BJ (cell line): ENCODE measurements at regions of chr1 and their contacts with region 1.

Region 1: DNA sequence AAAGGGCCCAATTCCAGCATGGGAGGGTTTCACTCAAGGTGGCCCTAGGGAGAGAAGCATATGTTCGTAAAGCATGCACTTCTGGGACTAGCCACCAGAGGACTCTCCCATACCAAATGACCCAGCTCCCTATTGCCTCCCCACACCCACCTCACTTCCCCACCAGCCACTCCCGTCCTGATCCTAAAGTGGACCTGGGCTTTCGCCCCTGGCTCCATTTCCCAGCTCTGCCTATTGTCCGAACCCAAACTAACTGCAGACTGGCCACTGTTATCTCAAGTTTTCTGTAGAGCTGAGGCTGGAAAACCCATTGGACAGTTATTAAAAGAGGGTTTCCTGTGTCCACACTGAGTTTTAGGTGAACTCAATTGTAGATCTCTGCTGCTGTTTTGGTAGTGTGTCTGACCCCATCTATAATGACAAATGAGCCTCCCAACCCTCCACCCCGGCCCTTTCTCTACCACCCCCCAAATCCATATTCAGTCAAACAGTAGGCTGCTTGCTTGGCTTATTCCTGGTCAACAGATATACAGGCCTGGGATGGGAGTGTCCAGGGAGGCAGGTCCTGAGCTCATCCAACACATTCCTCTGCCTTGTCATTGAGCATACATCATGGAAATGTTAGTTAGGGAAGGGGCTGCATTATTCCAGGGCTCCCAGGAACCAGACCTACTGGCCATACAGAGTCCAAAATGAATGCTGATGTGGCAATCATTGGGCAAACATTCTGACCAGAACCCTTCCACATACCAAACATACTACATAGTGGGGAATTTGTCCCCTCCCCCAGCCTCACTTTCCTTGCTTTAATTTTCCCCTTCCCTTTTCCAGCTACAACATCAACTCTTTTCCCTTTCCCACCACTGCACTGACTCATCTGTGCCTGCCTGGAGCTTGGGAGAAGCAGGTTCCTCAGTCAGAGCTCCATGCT is 59.2 kb downstream of the ABCA4 start:
- DNase-seq: no peak
- H3K4me3 ChIP-seq: no peak overlapping the region
- H3K27me3 ChIP-seq: no peaks in the 10 kb centered on the region
- CTCF ChIP-seq: peak; percentile 89

Region 2: DNA sequence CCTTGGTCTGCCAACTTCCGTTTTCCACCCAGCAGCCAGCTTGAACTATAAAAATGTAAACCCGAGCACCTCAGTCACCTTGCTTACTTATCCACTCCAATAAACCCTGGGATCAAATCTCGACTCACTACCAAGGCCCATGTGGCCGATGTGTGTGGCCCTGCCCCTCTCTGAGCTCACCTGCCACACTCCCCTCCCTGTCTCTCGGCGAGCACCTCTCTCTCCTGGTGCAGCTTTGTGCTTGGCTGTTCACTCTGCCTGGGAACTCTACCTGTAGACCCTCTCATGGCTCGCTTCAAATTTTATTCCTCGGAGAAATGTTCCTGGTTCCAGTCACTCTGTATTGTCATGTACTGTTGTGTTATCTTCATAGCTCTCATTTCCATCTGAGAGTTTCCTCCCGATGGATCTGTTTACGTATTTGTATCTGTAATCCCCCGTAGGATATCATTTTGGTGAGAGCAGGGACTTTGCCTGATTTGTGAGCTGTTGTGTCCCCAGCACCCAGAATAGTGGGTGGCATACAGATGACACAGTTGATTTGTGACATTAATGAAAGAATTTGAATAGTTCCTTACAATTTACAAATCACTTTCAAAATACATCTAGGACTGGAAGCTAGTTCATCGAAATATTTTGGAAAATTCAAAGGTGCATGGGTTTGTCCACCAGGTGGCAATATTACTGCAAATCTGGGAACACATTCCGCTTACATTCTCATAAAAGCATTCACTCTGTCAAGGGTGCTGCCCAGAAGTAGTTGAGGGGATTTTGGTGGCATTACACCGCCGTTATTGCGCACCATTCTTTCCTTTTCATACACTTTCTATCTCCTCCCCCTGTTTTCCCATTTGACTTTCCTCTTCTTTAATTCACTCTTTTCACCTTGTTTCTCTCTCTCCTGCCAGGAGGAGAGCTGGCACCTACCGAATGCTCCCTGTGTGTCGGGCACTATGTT is 36.1 kb before region 1 on chr1:
- CTCF ChIA-PET with region 1: interaction called, 32 read pairs
- POLR2A ChIA-PET with region 1: no interaction called
- DNase-seq: no peak
- H3K4me3 ChIP-seq: no peak overlapping the region
- H3K27me3 ChIP-seq: peaks cover 2% of the 10 kb centered on the region; the same call in 1 of the 2 replicates
- CTCF ChIP-seq: peak; percentile 67

Region 3: DNA sequence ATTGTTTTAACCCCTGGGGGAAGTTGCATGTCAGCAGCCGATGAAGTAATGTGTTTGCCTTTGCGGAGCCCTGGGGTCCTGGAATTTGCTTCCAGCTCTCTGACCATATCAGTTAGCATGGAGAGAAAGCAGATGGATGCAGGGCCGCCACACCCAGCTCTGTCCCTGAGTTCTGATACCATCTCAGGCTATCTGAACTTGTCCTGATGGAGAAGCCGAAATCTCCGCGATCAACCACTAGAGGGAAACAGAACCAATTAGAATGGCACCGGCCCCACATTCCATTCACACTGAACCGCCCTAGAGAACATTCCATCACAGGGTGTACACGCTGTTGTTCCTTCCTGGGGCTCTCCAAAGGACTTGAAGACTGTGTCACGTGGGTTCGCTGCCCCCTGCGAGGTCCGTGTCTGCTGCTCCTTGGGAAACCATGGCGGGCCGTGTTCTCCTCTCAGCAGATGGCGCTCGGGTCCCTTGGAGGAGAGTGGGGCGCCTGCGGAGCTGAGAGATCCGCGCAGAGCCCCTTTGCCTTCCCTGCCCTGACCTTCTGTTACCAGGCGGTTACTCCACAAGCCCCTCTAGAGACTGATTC is 16.2 kb before region 1 on chr1:
- CTCF ChIA-PET with region 1: interaction called, 34 read pairs
- POLR2A ChIA-PET with region 1: interaction called, 3 read pairs
- DNase-seq: peak; percentile 86
- H3K4me3 ChIP-seq: no peak overlapping the region
- H3K27me3 ChIP-seq: no peaks in the 10 kb centered on the region
- CTCF ChIP-seq: peak; percentile 71

Region 4: GRCh38 chr1:94101541-94102525 is 40.1 kb after region 1 on chr1:
- CTCF ChIA-PET with region 1: interaction called, 14 read pairs
- POLR2A ChIA-PET with region 1: no interaction called
- DNase-seq: no peak
- H3K4me3 ChIP-seq: no peak overlapping the region
- H3K27me3 ChIP-seq: no peaks in the 10 kb centered on the region
- CTCF ChIP-seq: no peak

Region 5: GRCh38 chr1:94186946-94187345 is 125.2 kb after region 1 on chr1:
- CTCF ChIA-PET with region 1: interaction called, 22 read pairs
- POLR2A ChIA-PET with region 1: no interaction called
- DNase-seq: no peak
- H3K4me3 ChIP-seq: no peak overlapping the region
- H3K27me3 ChIP-seq: no peaks in the 10 kb centered on the region
- CTCF ChIP-seq: no peak

Region 6: DNA sequence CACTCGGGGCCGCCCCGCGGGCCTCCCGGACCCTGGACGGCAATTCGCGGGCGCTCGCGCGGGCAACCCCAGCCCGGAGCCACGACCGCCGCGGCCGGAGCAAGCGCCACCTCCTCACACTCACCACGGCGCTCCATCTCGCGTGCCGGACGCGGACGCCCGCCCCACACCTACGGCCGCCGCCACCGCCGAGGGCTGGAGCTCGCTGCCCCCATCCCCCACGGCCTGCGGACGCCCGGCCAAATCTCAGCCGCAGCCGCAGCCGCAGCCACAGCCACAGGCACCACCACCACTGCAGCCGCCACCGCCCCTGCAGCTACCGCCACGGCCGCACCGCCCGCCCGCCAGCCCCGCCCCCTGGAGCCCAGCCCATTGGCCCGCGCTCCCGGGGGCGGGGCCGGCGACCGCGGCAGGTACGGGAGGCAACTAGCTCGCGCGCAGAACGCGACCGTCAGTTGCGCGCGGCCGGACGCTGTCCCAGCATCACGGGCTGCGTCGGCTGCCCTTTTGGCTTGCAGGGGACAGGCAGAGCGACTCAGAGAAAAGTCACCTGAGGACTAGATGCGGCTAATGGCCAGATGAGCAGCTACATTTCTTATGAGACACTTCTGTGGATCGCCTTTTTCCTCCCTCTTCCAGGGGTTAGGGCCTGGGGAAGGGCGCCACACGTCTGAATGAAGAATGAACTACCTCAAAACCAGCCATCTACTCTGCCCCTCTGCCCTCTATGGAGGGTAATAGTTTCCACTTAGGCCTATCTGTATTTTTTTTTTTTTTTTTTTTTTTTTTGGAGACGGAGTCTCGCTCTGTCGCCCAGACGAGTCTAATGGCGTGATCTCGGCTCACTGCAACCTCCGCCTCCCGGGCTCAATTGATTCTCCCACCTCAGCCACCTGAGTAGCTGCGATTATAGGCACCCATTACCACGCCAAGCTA is 175.8 kb after region 1 on chr1 and contains the start of gene ARHGAP29:
- CTCF ChIA-PET with region 1: interaction called, 25 read pairs
- POLR2A ChIA-PET with region 1: no interaction called
- DNase-seq: no peak
- H3K4me3 ChIP-seq: peak within 1 kb of the TSS; percentile 95
- H3K27me3 ChIP-seq: no peaks in the 10 kb centered on the region
- CTCF ChIP-seq: no peak
- polyA plus RNA-seq, gene ARHGAP29: 21.5 and 40.4 TPM in 2 replicates

Region 7: GRCh38 chr1:94335950-94336349 is 274.2 kb after region 1 on chr1:
- CTCF ChIA-PET with region 1: interaction called, 215 read pairs
- POLR2A ChIA-PET with region 1: no interaction called
- DNase-seq: peak; percentile 54
- H3K4me3 ChIP-seq: no peak overlapping the region
- H3K27me3 ChIP-seq: peaks cover 5% of the 10 kb centered on the region; the same call in 1 of the 2 replicates
- CTCF ChIP-seq: peak; percentile 82